CD4-positive, alpha-beta memory T cell (primary cell): ENCODE measurements at regions of chr6 and their contacts with region 1.

Region 1: GRCh38 chr6:159098636-159099106 is 53.9 kb upstream of the TAGAP start:
- DNase-seq: peak; percentile 82 to 91 (median 88)
- H3K4me3 ChIP-seq: peak overlapping the region in 1 of 2 donors; percentile 29
- H3K4me3 Mint-ChIP-seq: peak overlapping the region; percentile 71 to 89 (median 81)
- H3K27ac ChIP-seq: peak overlapping the region; percentile 76
- H3K27ac Mint-ChIP-seq: peak overlapping the region; percentile 93 to 99 (median 98)
- H3K4me1 ChIP-seq: peaks cover 64% of the 10 kb centered on the region
- H3K4me1 Mint-ChIP-seq: peaks cover 43 to 82% (median 60%) of the 10 kb centered on the region in 4 donors
- H3K27me3 ChIP-seq: no peaks in the 10 kb centered on the region
- H3K27me3 Mint-ChIP-seq: no peaks in the 10 kb centered on the region

Region 2: GRCh38 chr6:157823001-157823527 is 1275.6 kb before region 1 on chr6 and contains the start of gene SNX9:
- CTCF ChIA-PET with region 1: no interaction called
- POLR2A ChIA-PET with region 1: no interaction called
- intact Hi-C with region 1: no loop called
- DNase-seq: peak; percentile 53 to 66 (median 58)
- H3K4me3 ChIP-seq: peak within 1 kb of the TSS; percentile 21 to 62
- H3K4me3 Mint-ChIP-seq: peak within 1 kb of the TSS; percentile 91 to 99 (median 96)
- H3K27ac ChIP-seq: peak within 1 kb of the TSS; percentile 78
- H3K27ac Mint-ChIP-seq: peak within 1 kb of the TSS; percentile 93 to 99 (median 98)
- H3K4me1 ChIP-seq: peaks cover 18% of the 10 kb centered on the region
- H3K4me1 Mint-ChIP-seq: peaks cover 18 to 32% (median 22%) of the 10 kb centered on the region in 4 donors
- H3K27me3 ChIP-seq: no peaks in the 10 kb centered on the region
- H3K27me3 Mint-ChIP-seq: peaks cover 0 to 1% of the 10 kb centered on the region in 2 donors
- total RNA-seq, gene SNX9: 21.5 to 21.9 TPM

Region 3: GRCh38 chr6:159056003-159056402 is 42.7 kb before region 1 on chr6:
- CTCF ChIA-PET with region 1: interaction called, 22 read pairs
- POLR2A ChIA-PET with region 1: interaction called, 109 read pairs
- intact Hi-C with region 1: no loop called
- DNase-seq: no peak
- H3K4me3 ChIP-seq: no peak overlapping the region
- H3K4me3 Mint-ChIP-seq: peak overlapping the region; percentile 21 to 83 (median 72)
- H3K27ac ChIP-seq: peak overlapping the region; percentile 17
- H3K27ac Mint-ChIP-seq: peak overlapping the region; percentile 81 to 92 (median 86)
- H3K4me1 ChIP-seq: peaks cover 64% of the 10 kb centered on the region
- H3K4me1 Mint-ChIP-seq: peaks cover 38 to 74% (median 56%) of the 10 kb centered on the region in 4 donors
- H3K27me3 ChIP-seq: no peaks in the 10 kb centered on the region
- H3K27me3 Mint-ChIP-seq: no peaks in the 10 kb centered on the region